ENCODE measurements at regions of chr2 and their contacts with region 1.

Region 1: GRCh38 chr2:134253804-134254203 is at the start of gene MGAT5:
- DNase-seq: no peak
- H3K4me3 Mint-ChIP-seq: no peak within 1 kb of the TSS
- H3K27ac Mint-ChIP-seq: no peak within 1 kb of the TSS
- H3K4me1 Mint-ChIP-seq: peaks cover 63% of the 10 kb centered on the region
- H3K27me3 Mint-ChIP-seq: peaks cover 19% of the 10 kb centered on the region
- total RNA-seq, gene MGAT5: 25.8 and 26.2 TPM in 2 replicates

Region 2: GRCh38 chr2:134169788-134170187 is 84.0 kb before region 1 on chr2:
- intact Hi-C with region 1: loop called (anchors 2 kb)
- DNase-seq: no peak
- H3K4me3 Mint-ChIP-seq: no peak overlapping the region
- H3K27ac Mint-ChIP-seq: peak overlapping the region; percentile 47
- H3K4me1 Mint-ChIP-seq: peaks cover 17% of the 10 kb centered on the region
- H3K27me3 Mint-ChIP-seq: no peaks in the 10 kb centered on the region

Region 3: DNA sequence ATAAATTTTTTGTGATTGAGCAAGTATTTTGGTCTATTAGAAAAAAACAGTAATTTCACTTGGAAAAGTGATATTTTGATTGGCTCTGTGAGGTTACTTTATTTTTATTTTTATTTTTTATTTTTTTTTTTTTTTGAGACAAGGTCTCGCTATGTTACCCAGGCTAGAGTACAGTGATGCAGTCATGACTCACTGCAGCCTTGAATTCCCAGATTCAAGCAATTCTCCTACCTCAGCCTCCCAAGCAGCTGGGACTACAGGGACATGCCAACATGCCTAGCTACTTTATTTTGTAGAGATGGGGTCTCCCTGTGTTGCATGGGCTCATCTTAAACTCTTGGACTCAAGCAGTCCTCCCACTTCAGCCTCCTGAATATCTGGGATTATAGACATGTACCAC is 60.8 kb before region 1 on chr2:
- intact Hi-C with region 1: no loop called
- DNase-seq: no peak
- H3K4me3 Mint-ChIP-seq: no peak overlapping the region
- H3K27ac Mint-ChIP-seq: no peak overlapping the region
- H3K4me1 Mint-ChIP-seq: peaks cover 26% of the 10 kb centered on the region
- H3K27me3 Mint-ChIP-seq: no peaks in the 10 kb centered on the region

Region 4: GRCh38 chr2:134232868-134233727 is 20.7 kb before region 1 on chr2:
- intact Hi-C with region 1: loop called (anchors 1 kb)
- DNase-seq: no peak
- H3K4me3 Mint-ChIP-seq: peak overlapping the region; percentile 53
- H3K27ac Mint-ChIP-seq: peak overlapping the region; percentile 64
- H3K4me1 Mint-ChIP-seq: peaks cover 70% of the 10 kb centered on the region
- H3K27me3 Mint-ChIP-seq: peaks cover 2% of the 10 kb centered on the region

Region 5: GRCh38 chr2:134282629-134283400 is 29.0 kb after region 1 on chr2:
- intact Hi-C with region 1: loop called (anchors 1 kb)
- DNase-seq: peak; percentile 16
- H3K4me3 Mint-ChIP-seq: peak overlapping the region; percentile 20
- H3K27ac Mint-ChIP-seq: peak overlapping the region; percentile 63
- H3K4me1 Mint-ChIP-seq: peaks cover 33% of the 10 kb centered on the region
- H3K27me3 Mint-ChIP-seq: peaks cover 20% of the 10 kb centered on the region

Region 6: GRCh38 chr2:134301099-134301927 is 47.5 kb after region 1 on chr2:
- intact Hi-C with region 1: loop called (anchors 1 kb)
- DNase-seq: no peak
- H3K4me3 Mint-ChIP-seq: no peak overlapping the region
- H3K27ac Mint-ChIP-seq: no peak overlapping the region
- H3K4me1 Mint-ChIP-seq: peaks cover 16% of the 10 kb centered on the region
- H3K27me3 Mint-ChIP-seq: peaks cover 3% of the 10 kb centered on the region